ENCODE measurements at regions of chr9 and their contacts with region 1.

Region 1: GRCh38 chr9:34328987-34329832 is at the starts of genes KIF24 and NUDT2:
- DNase-seq: peak; percentile 94 to 99 (median 98)
- H3K4me3 ChIP-seq: peak within 1 kb of the TSS; percentile 92 to 100
- H3K4me3 Mint-ChIP-seq: peak within 1 kb of the TSS; percentile 92 to 97 (median 94)
- H3K27ac ChIP-seq: peak within 1 kb of the TSS; percentile 87
- H3K27ac Mint-ChIP-seq: peak within 1 kb of the TSS; percentile 87 to 99 (median 98)
- H3K4me1 ChIP-seq: peaks cover 17% of the 10 kb centered on the region
- H3K4me1 Mint-ChIP-seq: peaks cover 14 to 38% (median 28%) of the 10 kb centered on the region in 4 donors
- H3K27me3 ChIP-seq: no peaks in the 10 kb centered on the region
- H3K27me3 Mint-ChIP-seq: no peaks in the 10 kb centered on the region
- total RNA-seq, gene KIF24: 0.22 to 0.32 TPM
- total RNA-seq, gene NUDT2: 21.0 TPM

Region 2: GRCh38 chr9:34126207-34127034 is 202.8 kb before region 1 on chr9 and contains the start of gene DCAF12:
- CTCF ChIA-PET with region 1: no interaction called
- POLR2A ChIA-PET with region 1: no interaction called
- intact Hi-C with region 1: loop called (anchors 1 kb)
- DNase-seq: peak; percentile 90 to 92 (median 91)
- H3K4me3 ChIP-seq: peak within 1 kb of the TSS; percentile 88 to 92
- H3K4me3 Mint-ChIP-seq: peak within 1 kb of the TSS; percentile 96 to 100 (median 98)
- H3K27ac ChIP-seq: peak within 1 kb of the TSS; percentile 83
- H3K27ac Mint-ChIP-seq: peak within 1 kb of the TSS; percentile 95 to 99 (median 99)
- H3K4me1 ChIP-seq: peaks cover 45% of the 10 kb centered on the region
- H3K4me1 Mint-ChIP-seq: peaks cover 39 to 58% (median 45%) of the 10 kb centered on the region in 4 donors
- H3K27me3 ChIP-seq: no peaks in the 10 kb centered on the region
- H3K27me3 Mint-ChIP-seq: no peaks in the 10 kb centered on the region
- total RNA-seq, gene DCAF12: 29.7 to 31.0 TPM

Region 3: DNA sequence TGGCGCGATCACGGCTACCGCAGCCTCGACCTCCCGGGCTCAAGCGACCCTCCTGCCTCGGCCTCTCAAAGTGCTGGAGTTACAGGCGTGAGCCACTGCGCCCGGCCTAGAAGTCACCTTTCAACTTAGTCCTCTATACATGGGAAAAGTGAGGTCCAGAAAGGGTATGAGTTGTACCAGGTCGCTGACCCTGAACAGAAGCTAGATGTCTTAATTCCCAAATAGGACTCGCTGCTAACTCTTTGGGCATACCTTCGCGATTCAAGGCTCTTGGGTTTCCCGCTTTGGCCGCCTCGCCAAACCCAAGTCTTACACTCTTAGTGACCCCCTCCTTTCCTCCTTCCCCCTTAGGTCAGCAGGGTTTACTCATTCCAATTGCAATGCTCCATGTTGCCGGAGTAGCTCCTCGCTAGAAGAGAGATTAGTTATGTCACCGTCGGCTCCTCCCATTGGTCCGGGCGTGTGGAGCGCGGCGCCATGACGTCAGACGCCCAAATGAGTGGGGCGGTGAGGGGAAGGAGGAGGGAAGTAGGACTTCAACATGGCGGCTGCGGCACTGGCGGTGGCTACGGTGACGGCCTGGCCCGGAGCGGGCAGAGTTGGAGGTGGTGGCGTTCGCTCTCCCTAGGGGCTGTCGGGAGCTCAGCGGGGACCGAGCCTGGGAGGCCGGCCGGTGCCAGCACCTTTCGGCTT is 150.5 kb before region 1 on chr9 and contains the start of gene UBAP1:
- CTCF ChIA-PET with region 1: no interaction called
- POLR2A ChIA-PET with region 1: no interaction called
- intact Hi-C with region 1: loop called (anchors 1 kb)
- DNase-seq: peak; percentile 93 to 98 (median 94)
- H3K4me3 ChIP-seq: peak within 1 kb of the TSS; percentile 57 to 74
- H3K4me3 Mint-ChIP-seq: peak within 1 kb of the TSS; percentile 91 to 100 (median 99)
- H3K27ac ChIP-seq: peak within 1 kb of the TSS; percentile 94
- H3K27ac Mint-ChIP-seq: peak within 1 kb of the TSS; percentile 85 to 100 (median 100)
- H3K4me1 ChIP-seq: peaks cover 18% of the 10 kb centered on the region
- H3K4me1 Mint-ChIP-seq: peaks cover 13 to 27% (median 15%) of the 10 kb centered on the region in 4 donors
- H3K27me3 ChIP-seq: no peaks in the 10 kb centered on the region
- H3K27me3 Mint-ChIP-seq: no peaks in the 10 kb centered on the region
- total RNA-seq, gene UBAP1: 34.8 to 36.3 TPM

Region 4: DNA sequence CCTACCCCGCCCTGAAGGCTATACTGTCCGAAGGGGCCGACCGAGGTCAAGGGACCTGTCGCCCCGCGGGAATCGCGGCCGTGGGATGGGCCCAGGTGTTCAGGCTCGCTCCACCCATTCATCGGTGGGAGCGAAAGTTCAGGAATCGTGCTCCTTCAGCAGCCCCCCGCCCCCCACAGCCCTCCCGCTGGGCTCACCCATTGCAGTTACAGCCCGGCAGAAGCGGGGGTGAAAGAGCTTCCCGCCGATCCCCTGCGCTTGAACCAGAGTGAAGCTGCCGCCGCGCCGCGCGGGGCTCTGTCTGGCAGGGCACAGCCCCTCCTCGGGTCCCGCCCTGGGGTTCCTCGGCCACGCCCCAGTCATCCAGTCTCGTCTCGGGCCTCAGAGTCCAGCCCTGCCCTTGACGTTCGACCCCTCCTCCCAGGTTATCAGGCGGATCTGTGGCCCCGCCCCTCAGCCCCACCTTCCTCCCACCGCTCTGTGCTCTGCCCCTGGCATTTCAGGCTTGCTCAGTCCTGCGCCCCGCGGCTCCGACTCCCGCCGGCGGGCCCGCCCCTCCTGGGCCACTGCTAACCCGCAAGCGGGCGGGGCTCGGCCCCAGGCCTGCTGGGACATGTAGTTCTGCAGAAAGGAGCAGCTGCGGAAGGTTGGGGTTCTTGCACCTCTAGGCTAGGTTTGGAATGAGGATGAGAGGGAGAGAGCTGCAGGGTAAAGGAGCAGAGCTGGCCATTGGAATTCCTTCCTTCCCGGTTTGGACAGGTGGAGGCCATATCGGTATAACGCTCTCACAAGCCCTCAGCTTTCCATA is 47.6 kb after region 1 on chr9 and contains the start of gene MYORG:
- CTCF ChIA-PET with region 1: interaction called, 88 read pairs
- POLR2A ChIA-PET with region 1: interaction called, 33 read pairs
- intact Hi-C with region 1: loop called (anchors 1 kb)
- DNase-seq: peak; percentile 94 to 98 (median 96)
- H3K4me3 ChIP-seq: peak within 1 kb of the TSS; percentile 70 to 77
- H3K4me3 Mint-ChIP-seq: peak within 1 kb of the TSS; percentile 92 to 98 (median 94)
- H3K27ac ChIP-seq: peak within 1 kb of the TSS; percentile 49
- H3K27ac Mint-ChIP-seq: peak within 1 kb of the TSS; percentile 58 to 97 (median 93)
- H3K4me1 ChIP-seq: peaks cover 39% of the 10 kb centered on the region
- H3K4me1 Mint-ChIP-seq: peaks cover 33 to 54% (median 44%) of the 10 kb centered on the region in 4 donors
- H3K27me3 ChIP-seq: no peaks in the 10 kb centered on the region
- H3K27me3 Mint-ChIP-seq: no peaks in the 10 kb centered on the region
- total RNA-seq, gene MYORG: 1.3 to 1.4 TPM

Region 5: DNA sequence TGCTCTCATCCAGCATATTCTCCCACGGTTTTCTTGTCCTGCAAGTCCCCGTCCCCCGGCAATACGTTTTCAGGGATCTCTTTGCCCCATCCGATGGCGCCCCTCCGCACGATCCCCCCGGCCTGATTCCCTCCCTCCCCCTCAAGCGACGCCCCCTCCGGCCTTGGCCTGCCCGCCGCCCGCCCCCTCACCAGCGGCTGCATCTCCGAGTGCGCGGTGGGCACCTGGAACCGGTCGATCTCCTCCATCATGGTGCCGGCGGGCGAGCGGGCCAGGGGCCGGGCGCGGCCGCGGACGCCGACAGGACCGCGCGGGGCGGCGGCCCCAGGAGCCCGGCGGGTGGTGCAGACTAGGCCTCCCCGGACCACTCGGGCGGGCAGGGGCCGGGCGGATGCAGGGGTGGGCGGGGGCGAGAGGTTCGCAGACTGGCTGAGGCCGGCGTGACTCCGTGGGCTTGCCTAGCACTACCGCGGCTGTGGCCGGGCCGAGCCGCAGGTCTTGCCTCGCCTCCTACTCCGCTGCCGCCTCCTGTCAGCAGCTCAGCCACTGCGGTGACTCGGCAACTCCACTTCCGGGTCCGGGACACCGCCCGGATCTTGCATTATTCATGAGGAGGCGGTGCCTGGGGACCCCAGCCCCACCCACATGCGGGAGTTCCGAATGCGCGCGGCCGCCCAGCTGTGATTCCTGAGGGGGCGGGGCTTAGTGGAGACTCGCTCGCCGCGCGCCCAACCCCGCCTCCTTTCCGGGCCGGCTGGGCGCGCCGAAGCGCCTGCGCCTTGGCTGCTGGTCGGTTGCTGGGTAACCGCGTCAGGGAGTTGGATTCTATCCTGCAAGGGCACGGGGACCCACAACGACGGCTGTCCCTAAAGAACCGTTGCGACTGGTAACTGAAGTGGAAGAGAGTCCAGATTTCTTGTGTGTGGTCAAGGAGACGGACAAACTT is 129.1 kb after region 1 on chr9 and contains the starts of genes DNAI1 and FAM219A:
- CTCF ChIA-PET with region 1: no interaction called
- POLR2A ChIA-PET with region 1: no interaction called
- intact Hi-C with region 1: loop called (anchors 1 kb)
- DNase-seq: peak; percentile 98 to 100 (median 99)
- H3K4me3 ChIP-seq: peak within 1 kb of the TSS; percentile 44 to 61
- H3K4me3 Mint-ChIP-seq: peak within 1 kb of the TSS; percentile 90 to 95 (median 92)
- H3K27ac ChIP-seq: peak within 1 kb of the TSS; percentile 5
- H3K27ac Mint-ChIP-seq: peak within 1 kb of the TSS; percentile 49 to 90 (median 88)
- H3K4me1 ChIP-seq: peaks cover 19% of the 10 kb centered on the region
- H3K4me1 Mint-ChIP-seq: peaks cover 18 to 30% (median 24%) of the 10 kb centered on the region in 4 donors
- H3K27me3 ChIP-seq: no peaks in the 10 kb centered on the region
- H3K27me3 Mint-ChIP-seq: no peaks in the 10 kb centered on the region
- total RNA-seq, gene DNAI1: not detected
- total RNA-seq, gene FAM219A: 13.9 to 16.3 TPM

Region 6: DNA sequence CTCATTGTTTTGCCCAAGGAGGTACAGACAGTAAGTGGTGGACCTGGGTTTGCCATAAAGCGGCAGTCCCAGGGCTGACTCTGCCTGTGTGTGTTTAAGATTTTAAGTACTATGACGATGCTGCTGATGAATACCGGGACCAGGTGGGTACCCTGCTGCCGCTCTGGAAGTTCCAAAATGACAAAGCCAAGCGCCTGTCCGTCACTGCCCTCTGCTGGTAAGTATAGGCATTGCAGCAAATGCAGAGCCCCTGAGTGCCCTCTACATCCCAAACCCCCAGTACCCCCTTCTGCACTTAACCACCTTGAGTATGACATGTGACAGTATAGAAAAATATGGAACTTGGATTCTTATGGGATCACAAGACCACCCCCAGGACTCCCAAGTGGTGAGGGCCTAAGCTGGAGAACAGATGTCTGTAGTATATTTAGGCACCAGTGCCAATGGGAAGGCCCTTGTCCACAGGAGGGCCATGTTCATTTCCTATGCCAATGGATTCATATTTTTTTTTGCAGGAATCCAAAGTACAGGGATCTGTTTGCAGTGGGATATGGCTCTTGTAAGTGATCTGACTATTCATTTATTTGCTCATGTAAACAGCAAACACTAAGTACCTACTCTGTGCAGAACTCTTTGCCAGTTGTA is 171.5 kb after region 1 on chr9:
- CTCF ChIA-PET with region 1: interaction called, 19 read pairs
- POLR2A ChIA-PET with region 1: no interaction called
- intact Hi-C with region 1: no loop called
- DNase-seq: peak; percentile 54 to 69 (median 62)
- H3K4me3 ChIP-seq: no peak overlapping the region
- H3K4me3 Mint-ChIP-seq: no peak overlapping the region
- H3K27ac ChIP-seq: no peak overlapping the region
- H3K27ac Mint-ChIP-seq: no peak overlapping the region
- H3K4me1 ChIP-seq: no peaks in the 10 kb centered on the region
- H3K4me1 Mint-ChIP-seq: peaks cover 0 to 3% (median 1%) of the 10 kb centered on the region in 4 donors
- H3K27me3 ChIP-seq: no peaks in the 10 kb centered on the region
- H3K27me3 Mint-ChIP-seq: peaks cover 3 to 10% of the 10 kb centered on the region in 2 donors